ENCODE measurements at regions of chr18 and their contacts with region 1.

Region 1: GRCh38 chr18:48002933-48003365 is 72.5 kb upstream of the SMAD2 start:
- DNase-seq: no peak

Region 2: GRCh38 chr18:47863041-47863440 is 139.9 kb before region 1 on chr18:
- intact Hi-C with region 1: loop called (anchors 5 kb)
- DNase-seq: no peak

Region 3: DNA sequence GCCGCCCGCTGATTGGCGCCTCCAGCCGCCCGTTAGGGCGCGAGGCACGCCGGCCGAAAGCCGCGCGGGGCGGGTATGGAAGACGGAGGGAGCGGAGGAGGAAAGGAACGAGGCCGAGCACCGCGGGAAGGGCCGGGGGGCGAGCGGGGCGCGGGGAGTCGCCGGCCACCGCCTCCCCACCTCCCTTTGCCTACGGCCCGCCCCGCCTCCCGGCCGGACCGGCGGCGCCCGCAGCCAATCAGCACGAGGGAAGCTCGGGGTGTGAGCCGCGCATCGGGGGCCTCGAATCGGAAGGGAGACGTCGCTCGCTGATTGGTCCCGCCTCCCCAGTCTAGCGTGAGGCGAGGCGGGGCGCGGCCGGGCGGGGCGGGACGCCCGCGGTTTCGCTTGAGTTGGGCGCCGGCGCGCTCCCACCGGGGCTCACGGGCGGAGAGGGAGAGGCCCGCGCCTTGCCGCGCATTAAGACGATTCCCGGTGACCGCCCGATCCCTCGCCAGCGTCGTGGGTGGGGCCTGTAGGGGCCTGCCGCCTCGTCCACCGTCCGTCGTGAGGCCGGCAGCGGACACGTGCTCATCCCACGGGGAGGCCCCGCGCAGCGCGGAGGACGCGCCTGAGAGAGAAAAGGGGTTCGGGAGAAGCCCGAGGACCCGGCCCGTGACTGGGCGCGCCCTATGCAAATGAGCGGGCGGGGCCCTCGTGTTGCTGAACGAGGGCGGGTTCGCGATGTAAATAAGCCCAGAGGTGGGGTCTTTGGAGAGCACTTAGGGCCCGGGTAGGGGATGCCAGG is 71.8 kb before region 1 on chr18:
- intact Hi-C with region 1: loop called (anchors 5 kb)
- DNase-seq: peak; percentile 99